SK-N-SH (cell line): ENCODE measurements at regions of chr7 and their contacts with region 1.

Region 1: GRCh38 chr7:28298870-28299518 is 113.3 kb upstream of the CREB5 start:
- DNase-seq: peak; percentile 77
- H3K4me3 ChIP-seq: no peak overlapping the region
- H3K27ac ChIP-seq: no peak overlapping the region
- H3K4me1 ChIP-seq: no peaks in the 10 kb centered on the region; a peak in 2 of 4 replicates
- H3K27me3 ChIP-seq: no peaks in the 10 kb centered on the region; the same call in 1 of the 2 replicates
- CTCF ChIP-seq: peak; percentile 79
- EP300 ChIP-seq: no peak
- RAD21 ChIP-seq: peak; percentile 99

Region 2: GRCh38 chr7:28280516-28280915 is 18.5 kb before region 1 on chr7:
- CTCF ChIA-PET with region 1: interaction called, 32 read pairs
- POLR2A ChIA-PET with region 1: no interaction called
- DNase-seq: no peak
- H3K4me3 ChIP-seq: no peak overlapping the region
- H3K27ac ChIP-seq: no peak overlapping the region
- H3K4me1 ChIP-seq: peaks cover 0 to 13% of the 10 kb centered on the region in 2 experiments; a peak in 2 of 4 replicates
- H3K27me3 ChIP-seq: peaks cover 8% of the 10 kb centered on the region; the same call in 1 of the 2 replicates
- CTCF ChIP-seq: no peak
- EP300 ChIP-seq: no peak
- RAD21 ChIP-seq: no peak

Region 3: GRCh38 chr7:28323833-28324232 is 24.8 kb after region 1 on chr7:
- CTCF ChIA-PET with region 1: interaction called, 14 read pairs
- POLR2A ChIA-PET with region 1: no interaction called
- DNase-seq: no peak
- H3K4me3 ChIP-seq: no peak overlapping the region
- H3K27ac ChIP-seq: no peak overlapping the region
- H3K4me1 ChIP-seq: no peaks in the 10 kb centered on the region
- H3K27me3 ChIP-seq: no peaks in the 10 kb centered on the region
- CTCF ChIP-seq: no peak
- EP300 ChIP-seq: no peak
- RAD21 ChIP-seq: no peak

Region 4: GRCh38 chr7:28364082-28364481 is 65.1 kb after region 1 on chr7:
- CTCF ChIA-PET with region 1: interaction called, 21 read pairs
- POLR2A ChIA-PET with region 1: no interaction called
- DNase-seq: no peak
- H3K4me3 ChIP-seq: no peak overlapping the region
- H3K27ac ChIP-seq: no peak overlapping the region
- H3K4me1 ChIP-seq: no peaks in the 10 kb centered on the region
- H3K27me3 ChIP-seq: no peaks in the 10 kb centered on the region
- CTCF ChIP-seq: peak; percentile 45
- EP300 ChIP-seq: no peak
- RAD21 ChIP-seq: no peak

Region 5: DNA sequence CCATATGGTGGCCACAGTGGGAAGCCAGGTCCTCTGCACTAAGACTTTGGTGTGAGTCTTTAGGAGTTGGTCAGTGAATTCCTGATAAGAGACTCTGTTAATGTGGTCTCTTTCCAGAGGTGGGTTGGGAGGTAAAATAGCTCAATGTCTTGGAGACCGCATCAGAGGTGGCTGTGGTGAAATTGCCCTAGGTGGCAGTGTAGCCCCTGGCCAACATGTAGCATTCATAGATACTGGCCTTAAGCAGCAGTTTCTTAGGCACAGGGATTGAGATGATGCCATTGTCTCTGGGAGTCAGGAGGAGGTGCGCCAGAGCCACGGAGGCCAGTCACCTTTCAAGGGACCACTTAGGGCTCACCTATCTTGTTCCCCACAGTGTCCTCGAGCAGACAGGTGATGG is 316.1 kb after region 1 on chr7:
- CTCF ChIA-PET with region 1: interaction called, 14 read pairs
- POLR2A ChIA-PET with region 1: no interaction called
- DNase-seq: no peak
- H3K4me3 ChIP-seq: no peak overlapping the region
- H3K27ac ChIP-seq: no peak overlapping the region
- H3K4me1 ChIP-seq: peaks cover 0 to 14% of the 10 kb centered on the region in 2 experiments; a peak in 2 of 4 replicates
- H3K27me3 ChIP-seq: no peaks in the 10 kb centered on the region
- CTCF ChIP-seq: peak; percentile 47
- EP300 ChIP-seq: no peak
- RAD21 ChIP-seq: peak; percentile 46

Region 6: DNA sequence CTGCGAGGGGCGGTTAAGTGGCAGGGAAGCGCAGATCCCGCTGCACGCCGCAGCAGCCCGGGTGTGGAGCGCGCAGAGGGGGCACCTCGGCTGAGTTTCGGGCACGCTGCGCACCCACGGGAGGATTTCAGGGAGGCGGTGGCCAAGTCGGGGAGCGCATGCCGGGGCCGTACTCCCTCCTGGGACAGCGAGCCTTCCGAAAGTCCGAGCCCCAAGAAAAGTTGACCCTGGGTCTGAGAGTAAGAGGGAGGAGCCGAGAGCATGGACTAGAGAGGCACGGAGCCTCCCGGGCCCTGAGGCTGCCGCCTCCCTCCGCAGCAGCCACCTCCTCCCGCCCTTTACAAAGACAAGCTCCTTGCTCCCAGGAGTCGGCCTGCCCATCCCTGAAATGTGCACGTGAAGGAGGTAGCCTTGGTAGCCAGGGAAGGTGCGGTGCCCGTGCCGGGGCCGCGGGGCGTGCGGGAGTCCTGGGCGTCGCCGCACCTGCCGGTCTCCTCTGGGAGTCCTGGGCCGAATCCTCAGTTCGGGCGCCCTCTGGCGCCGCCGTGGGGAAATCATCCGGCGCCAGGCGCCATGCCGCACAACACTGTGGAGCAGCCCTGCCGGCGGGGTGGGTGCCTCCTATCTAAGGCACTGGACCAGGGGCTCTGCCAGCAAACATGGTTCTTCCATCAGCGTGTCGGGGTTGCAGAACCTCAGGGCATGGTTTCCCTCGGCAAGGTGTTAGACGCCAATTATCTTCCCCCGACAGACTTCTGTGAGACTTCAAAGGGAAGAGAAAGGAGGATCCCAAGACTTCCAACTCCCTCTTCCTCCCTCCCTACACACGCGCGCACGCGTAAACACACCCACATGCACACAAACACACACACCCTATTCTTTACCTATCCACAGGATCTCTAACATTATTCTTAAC is 555.1 kb after region 1 on chr7:
- CTCF ChIA-PET with region 1: interaction called, 47 read pairs
- POLR2A ChIA-PET with region 1: no interaction called
- DNase-seq: peak; percentile 96
- H3K4me3 ChIP-seq: peak overlapping the region; percentile 58 to 64
- H3K27ac ChIP-seq: no peak overlapping the region
- H3K4me1 ChIP-seq: peaks cover 4 to 9% of the 10 kb centered on the region in 2 experiments; a peak in 2 of 4 replicates
- H3K27me3 ChIP-seq: peaks cover 27% of the 10 kb centered on the region; the same call in 1 of the 2 replicates
- CTCF ChIP-seq: peak; percentile 97
- EP300 ChIP-seq: no peak
- RAD21 ChIP-seq: peak; percentile 95